Posterior vena cava (tissue), 2 donors: ENCODE measurements at regions of chr7 and their contacts with region 1.

Region 1: DNA sequence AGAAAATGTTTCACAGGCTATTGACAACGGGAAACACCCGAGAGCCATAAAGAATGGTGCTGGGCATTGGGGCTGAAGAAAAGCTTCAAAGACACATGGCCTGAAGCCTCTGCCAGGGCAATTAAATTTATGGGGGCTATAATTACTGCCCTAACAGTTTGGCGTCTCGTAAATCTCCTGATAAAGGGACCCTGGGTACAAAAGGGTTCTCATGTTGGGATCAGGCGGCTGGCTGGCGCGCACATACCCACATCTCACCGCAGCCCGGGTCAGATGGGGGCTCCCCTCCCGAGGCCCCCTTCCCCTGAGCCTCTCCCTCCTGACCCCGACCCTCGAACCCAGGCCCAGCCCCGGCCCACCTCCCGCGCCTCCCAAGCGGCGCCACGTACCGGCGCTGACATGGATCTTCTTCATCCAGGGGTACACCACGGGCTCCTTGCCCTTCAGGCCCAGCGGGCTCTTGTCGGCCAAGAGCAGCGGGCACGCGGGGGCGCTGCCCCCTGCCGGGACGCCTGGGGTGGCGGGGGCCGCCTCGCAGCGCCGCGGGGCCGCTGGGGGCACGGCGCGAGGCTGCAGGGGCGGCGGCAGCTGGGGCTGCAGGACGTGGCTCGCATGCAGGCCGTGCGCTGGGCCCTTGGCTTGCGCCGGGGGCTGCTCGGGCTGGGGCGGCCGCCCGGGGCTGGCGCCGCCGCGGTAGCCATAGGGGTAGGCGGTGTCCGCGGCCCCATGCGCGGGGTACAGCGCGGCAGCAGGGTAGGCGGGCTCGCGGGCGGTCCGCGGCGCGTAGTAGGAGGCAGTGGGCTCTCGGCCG is 623 bp downstream of the HOXA4 start:
- DNase-seq: no peak

Region 2: GRCh38 chr7:27010068-27010467 is 119.9 kb before region 1 on chr7:
- intact Hi-C with region 1: no loop called
- DNase-seq: no peak

Region 3: DNA sequence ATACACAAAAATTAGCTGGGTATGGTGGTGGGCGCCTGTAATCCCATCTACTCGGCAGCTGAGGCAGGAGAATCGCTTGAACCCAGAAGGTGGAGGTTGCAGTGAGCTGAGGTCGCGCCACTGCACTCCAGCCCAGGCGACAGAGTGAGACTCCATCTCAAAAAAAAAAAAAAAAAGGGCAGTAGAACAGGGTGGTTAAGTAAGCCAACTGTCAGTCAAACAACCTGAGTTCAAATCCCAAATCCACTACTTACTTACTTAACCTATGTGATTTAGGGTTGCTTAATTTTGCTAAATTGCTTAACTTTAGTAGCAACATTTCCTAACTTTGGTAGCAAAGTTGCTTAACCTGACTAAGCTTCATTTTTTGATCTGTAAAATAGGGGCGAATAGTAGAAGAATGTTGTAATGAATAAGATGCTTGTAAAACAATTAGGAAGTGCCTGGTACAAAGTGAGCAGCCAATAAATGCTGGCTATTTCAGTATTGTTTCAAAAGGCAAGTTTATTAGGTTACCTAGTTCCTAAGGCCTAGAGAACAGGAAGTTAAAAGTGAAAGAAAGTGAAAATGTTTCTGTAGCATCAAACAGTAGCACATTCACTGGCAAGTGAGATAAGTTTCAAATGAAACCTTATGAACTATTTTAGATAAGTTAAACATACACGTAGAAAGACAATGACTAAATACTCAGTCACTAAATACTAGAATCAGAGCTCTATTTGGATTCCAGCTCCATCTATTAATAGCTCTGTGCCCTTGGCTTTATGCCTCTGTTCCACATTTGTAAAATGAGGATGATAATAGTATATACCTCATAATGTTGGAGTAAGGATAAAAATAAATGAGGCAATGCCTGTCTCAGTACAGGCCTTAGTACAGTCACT is 98.4 kb before region 1 on chr7:
- intact Hi-C with region 1: loop called in 1 of 2 experiments (anchors 10 kb)
- DNase-seq: no peak

Region 4: DNA sequence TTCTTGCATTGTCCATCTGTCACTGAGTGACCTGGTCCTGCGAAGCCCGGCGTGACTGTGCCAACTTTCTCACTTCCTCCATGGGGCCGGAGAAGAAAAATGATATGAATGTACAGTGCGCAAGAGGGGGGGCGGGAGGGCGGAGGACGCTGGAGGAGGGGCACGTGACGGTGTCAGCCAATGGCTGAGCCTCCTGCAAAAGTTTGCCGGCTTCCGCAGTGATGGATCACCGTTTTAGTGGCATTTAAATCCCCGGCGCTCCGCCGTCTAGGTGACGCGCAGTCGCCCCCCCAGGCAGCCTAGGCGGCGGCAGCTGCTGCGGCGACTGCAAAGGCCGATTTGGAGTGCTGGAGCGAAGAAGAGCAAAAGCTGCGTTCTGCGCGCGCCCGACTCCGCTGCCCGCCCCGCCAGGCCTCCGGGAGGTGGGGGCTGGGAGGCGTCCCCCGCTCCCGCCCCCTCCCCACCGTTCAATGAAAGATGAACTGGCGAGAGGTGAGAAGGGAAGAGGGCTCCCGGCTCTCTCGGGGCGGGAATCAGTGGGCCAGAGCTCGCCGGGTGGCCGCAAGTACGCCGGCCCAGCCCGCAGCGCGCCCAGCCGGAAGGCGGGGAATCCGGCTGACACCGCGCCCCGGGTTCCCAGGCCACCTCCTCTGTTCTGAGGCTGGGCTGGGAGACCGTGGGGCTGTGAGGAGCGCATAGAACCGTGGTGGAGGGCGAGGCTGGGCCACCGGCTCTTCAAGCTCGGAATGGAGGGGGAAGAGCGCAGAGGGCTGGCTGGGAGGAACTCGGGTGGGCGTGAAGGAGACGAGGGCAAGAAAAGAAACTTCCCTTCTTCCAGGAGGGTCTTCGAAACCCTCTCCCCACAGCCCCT is 33.8 kb before region 1 on chr7 and contains the start of gene HOXA1:
- intact Hi-C with region 1: no loop called
- DNase-seq: peak; percentile 96
- total RNA-seq, gene HOXA1: 0.71 to 0.97 TPM

Region 5: DNA sequence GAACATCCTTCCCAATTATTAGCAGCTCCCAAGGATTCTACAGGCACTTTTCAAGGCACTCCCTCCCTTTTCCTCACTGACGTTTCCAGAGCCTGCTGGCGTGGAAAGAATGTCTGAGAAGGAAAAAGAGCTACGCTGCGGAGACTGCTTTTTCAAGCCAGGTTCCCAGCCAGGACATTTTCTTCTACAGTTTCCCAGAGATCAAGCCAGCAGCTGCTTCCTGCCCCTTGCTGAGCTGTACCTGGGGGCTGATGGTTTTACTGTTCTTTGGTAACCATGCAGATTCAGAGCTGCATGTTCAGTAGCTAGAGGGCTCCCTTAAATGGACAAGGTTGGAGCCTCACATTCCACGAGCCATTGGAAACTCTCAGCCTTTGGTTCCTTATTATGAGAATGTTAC is 246.0 kb after region 1 on chr7:
- intact Hi-C with region 1: no loop called
- DNase-seq: no peak